BJ (cell line): ENCODE measurements at regions of chr18 and their contacts with region 1.

Region 1: GRCh38 chr18:3245853-3246634 is 1.6 kb upstream of the MYL12A start:
- DNase-seq: no peak
- H3K4me3 ChIP-seq: peak overlapping the region; percentile 95
- H3K27me3 ChIP-seq: no peaks in the 10 kb centered on the region
- CTCF ChIP-seq: peak; percentile 94

Region 2: DNA sequence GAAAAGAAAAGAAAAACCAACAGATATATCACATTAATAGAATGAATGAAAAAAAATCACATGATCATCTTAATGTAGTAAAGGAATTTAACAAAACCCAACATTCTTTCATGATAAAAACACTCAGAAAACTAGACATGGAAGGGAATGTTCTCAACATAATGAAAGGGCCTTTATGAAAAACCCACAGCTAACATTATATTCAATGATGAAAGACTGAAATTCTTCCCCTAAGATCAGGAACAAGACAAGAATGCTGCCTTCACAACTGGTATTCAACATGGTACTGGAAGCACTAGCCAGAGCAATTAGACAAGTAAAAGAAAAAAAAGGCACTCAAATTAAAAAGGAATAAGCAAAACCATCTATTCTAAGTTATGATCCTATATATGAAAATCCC is 427.8 kb before region 1 on chr18:
- CTCF ChIA-PET with region 1: no interaction called
- POLR2A ChIA-PET with region 1: no interaction called
- DNase-seq: no peak
- H3K4me3 ChIP-seq: no peak overlapping the region
- H3K27me3 ChIP-seq: no peaks in the 10 kb centered on the region
- CTCF ChIP-seq: no peak

Region 3: DNA sequence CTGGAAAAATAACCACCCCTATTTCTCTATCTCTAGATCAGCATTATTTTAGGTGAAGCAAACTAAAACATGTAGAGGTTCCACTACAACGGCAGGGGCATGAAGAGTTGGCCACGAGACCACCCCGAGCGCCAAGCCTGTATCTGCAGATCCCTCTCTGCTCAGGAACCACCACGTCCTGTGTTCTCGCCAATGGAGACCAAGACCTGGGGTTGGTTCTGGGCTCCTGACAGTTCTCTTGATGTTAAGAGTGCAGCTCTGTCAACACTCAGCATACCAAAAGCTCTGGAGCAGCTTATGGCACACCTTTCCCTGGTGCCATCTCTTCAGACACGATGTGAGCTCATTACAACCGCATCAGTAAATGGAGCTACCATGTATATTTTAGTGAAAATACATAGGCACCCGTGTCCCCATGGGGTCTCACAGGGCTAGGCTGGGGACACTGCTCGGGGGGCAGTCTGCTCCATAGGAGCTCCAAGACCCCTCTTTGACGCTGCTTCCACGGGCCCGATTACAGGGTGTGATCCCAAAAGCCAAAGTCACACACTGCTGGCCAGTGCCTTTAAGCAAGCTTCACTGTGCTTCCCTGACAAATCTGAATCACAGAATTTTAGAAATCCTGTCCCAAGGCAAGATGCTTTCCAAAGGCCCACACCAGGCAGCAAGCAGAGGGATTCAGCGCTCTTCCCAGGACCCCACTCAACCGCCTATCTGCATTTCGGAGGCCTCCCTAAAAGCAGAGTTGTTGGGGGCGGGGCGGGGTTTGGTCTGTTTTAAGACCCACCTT is 327.1 kb before region 1 on chr18:
- CTCF ChIA-PET with region 1: interaction called, 17 read pairs
- POLR2A ChIA-PET with region 1: no interaction called
- DNase-seq: no peak
- H3K4me3 ChIP-seq: no peak overlapping the region
- H3K27me3 ChIP-seq: no peaks in the 10 kb centered on the region
- CTCF ChIP-seq: no peak

Region 4: GRCh38 chr18:2932247-2933181 is 313.5 kb before region 1 on chr18:
- CTCF ChIA-PET with region 1: interaction called, 36 read pairs
- POLR2A ChIA-PET with region 1: no interaction called
- DNase-seq: no peak
- H3K4me3 ChIP-seq: no peak overlapping the region
- H3K27me3 ChIP-seq: no peaks in the 10 kb centered on the region
- CTCF ChIP-seq: peak; percentile 62

Region 5: DNA sequence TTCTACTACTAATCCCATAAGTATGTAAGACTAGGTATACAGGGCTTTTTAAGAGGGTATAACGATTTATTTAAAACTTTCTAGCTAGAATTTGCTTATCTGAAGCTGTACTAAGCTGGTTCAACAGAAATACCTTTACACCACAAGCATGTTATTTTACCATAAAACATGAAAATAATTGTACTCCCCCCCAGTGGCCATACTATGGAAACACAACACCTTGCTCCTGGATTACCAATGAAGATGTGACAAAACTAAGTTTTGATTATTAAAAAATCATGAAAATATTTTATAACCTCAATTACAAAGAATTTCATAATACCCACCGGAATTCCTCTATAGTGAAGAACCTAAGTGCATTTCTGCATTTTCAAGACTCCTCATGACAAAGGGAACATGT is 260.4 kb before region 1 on chr18:
- CTCF ChIA-PET with region 1: interaction called, 5 read pairs
- POLR2A ChIA-PET with region 1: interaction called, 21 read pairs
- DNase-seq: no peak
- H3K4me3 ChIP-seq: no peak overlapping the region
- H3K27me3 ChIP-seq: no peaks in the 10 kb centered on the region
- CTCF ChIP-seq: peak; percentile 45; the same call in 1 of the 2 replicates

Region 6: GRCh38 chr18:3104190-3105054 is 141.6 kb before region 1 on chr18:
- CTCF ChIA-PET with region 1: no interaction called
- POLR2A ChIA-PET with region 1: no interaction called
- DNase-seq: no peak
- H3K4me3 ChIP-seq: no peak overlapping the region
- H3K27me3 ChIP-seq: peaks cover 2% of the 10 kb centered on the region; the same call in 1 of the 2 replicates
- CTCF ChIP-seq: no peak